PC-3 (cell line): ENCODE measurements at regions of chr1 and their contacts with region 1.

Region 1: GRCh38 chr1:80218112-80218511 is 1211.6 kb upstream of the ADGRL4 start:
- DNase-seq: peak; percentile 77
- ATAC-seq: peak; percentile 92
- H3K4me3 ChIP-seq: no peak overlapping the region
- H3K27ac ChIP-seq: no peak overlapping the region
- H3K4me1 ChIP-seq: no peaks in the 10 kb centered on the region
- H3K27me3 ChIP-seq: no peaks in the 10 kb centered on the region
- CTCF ChIP-seq: peak; percentile 67

Region 2: GRCh38 chr1:79587229-79587628 is 630.9 kb before region 1 on chr1:
- CTCF ChIA-PET with region 1: no interaction called
- POLR2A ChIA-PET with region 1: no interaction called
- intact Hi-C with region 1: loop called (anchors 1 kb)
- DNase-seq: no peak
- ATAC-seq: 0 out of 2 replicates have a peak, but pooled peaks have one; percentile 24
- H3K4me3 ChIP-seq: no peak overlapping the region
- H3K27ac ChIP-seq: no peak overlapping the region
- H3K4me1 ChIP-seq: no peaks in the 10 kb centered on the region
- H3K27me3 ChIP-seq: no peaks in the 10 kb centered on the region
- CTCF ChIP-seq: no peak

Region 3: DNA sequence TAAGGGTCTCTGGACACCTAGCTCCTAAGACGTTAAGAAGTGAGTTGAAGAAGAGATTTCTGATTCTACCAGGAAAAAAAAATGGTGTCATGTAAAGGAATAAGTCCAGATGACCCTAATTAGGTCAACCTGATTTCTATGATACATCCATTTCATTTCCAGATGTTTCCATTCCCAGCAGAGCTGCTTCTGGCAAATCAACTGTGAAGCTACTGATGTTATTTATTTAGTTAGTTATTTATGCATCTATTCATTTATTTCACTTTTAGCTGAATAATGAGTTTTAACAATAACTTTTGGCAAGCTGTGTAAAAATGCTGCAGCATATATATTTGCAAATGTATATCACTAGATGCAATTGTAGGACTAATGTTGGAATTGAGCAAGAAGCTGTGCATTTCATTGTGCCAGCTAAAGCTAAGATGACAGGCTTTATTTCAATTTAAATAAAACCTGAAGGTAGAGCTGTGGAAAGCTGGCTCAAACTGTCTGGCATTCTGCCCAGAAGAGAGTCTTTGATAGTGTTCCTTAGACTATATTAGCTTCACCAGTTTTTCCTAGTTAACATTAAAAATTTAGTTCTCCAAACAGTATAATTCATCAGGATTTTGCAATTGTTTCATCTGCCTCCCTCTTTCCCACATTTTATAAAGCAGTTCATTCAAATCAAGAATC is 47.2 kb before region 1 on chr1:
- CTCF ChIA-PET with region 1: no interaction called
- POLR2A ChIA-PET with region 1: no interaction called
- intact Hi-C with region 1: no loop called
- DNase-seq: no peak
- ATAC-seq: no peak
- H3K4me3 ChIP-seq: no peak overlapping the region
- H3K27ac ChIP-seq: no peak overlapping the region
- H3K4me1 ChIP-seq: no peaks in the 10 kb centered on the region
- H3K27me3 ChIP-seq: no peaks in the 10 kb centered on the region
- CTCF ChIP-seq: no peak

Region 4: GRCh38 chr1:80202118-80202517 is 16.0 kb before region 1 on chr1:
- CTCF ChIA-PET with region 1: no interaction called
- POLR2A ChIA-PET with region 1: no interaction called
- intact Hi-C with region 1: no loop called
- DNase-seq: no peak
- ATAC-seq: no peak
- H3K4me3 ChIP-seq: no peak overlapping the region
- H3K27ac ChIP-seq: no peak overlapping the region
- H3K4me1 ChIP-seq: no peaks in the 10 kb centered on the region
- H3K27me3 ChIP-seq: no peaks in the 10 kb centered on the region
- CTCF ChIP-seq: no peak

Region 5: DNA sequence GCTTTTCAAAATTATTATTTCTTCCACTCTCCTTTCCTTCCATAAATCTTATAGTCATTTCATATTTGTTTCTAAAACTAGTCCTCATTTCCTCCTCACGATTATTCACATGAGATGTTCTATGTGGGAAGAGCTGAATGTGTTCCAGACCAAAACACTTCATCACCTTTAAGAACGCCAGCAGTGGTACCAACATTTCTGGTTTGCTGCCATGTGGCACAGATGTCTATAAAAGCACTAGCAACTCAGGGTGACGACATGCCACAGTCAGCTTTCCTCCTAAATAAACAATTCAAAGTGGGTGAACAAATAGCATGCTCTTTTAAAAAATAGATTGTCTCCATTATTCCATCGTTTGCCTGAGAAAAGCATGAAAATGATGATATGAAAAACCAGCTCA is 364.9 kb after region 1 on chr1:
- CTCF ChIA-PET with region 1: no interaction called
- POLR2A ChIA-PET with region 1: no interaction called
- intact Hi-C with region 1: loop called (anchors 5 kb)
- DNase-seq: no peak
- ATAC-seq: no peak
- H3K4me3 ChIP-seq: no peak overlapping the region
- H3K27ac ChIP-seq: no peak overlapping the region
- H3K4me1 ChIP-seq: no peaks in the 10 kb centered on the region
- H3K27me3 ChIP-seq: no peaks in the 10 kb centered on the region
- CTCF ChIP-seq: no peak

Region 6: GRCh38 chr1:81542196-81542595 is 1324.1 kb after region 1 on chr1:
- CTCF ChIA-PET with region 1: no interaction called
- POLR2A ChIA-PET with region 1: no interaction called
- intact Hi-C with region 1: loop called (anchors 5 kb)
- DNase-seq: no peak
- ATAC-seq: no peak
- H3K4me3 ChIP-seq: no peak overlapping the region
- H3K27ac ChIP-seq: no peak overlapping the region
- H3K4me1 ChIP-seq: no peaks in the 10 kb centered on the region
- H3K27me3 ChIP-seq: peaks cover 45% of the 10 kb centered on the region
- CTCF ChIP-seq: no peak